CD8-positive, alpha-beta T cell (primary cell): ENCODE measurements at regions of chr6 and their contacts with region 1.

Region 1: GRCh38 chr6:106360410-106360988 is at the start of gene CRYBG1:
- DNase-seq: peak; percentile 38 to 82 (median 73)
- ATAC-seq: peak; percentile 95
- H3K4me3 ChIP-seq: peak within 1 kb of the TSS; percentile 44 to 63
- H3K4me3 Mint-ChIP-seq: peak within 1 kb of the TSS; percentile 72
- H3K27ac ChIP-seq: no peak within 1 kb of the TSS
- H3K27ac Mint-ChIP-seq: no peak within 1 kb of the TSS
- H3K4me1 ChIP-seq: peaks cover 13% of the 10 kb centered on the region
- H3K4me1 Mint-ChIP-seq: peaks cover 11% of the 10 kb centered on the region
- H3K27me3 ChIP-seq: peaks cover 19 to 20% of the 10 kb centered on the region in 2 experiments
- H3K27me3 Mint-ChIP-seq: peaks cover 48% of the 10 kb centered on the region
- CTCF ChIP-seq: peak; percentile 97
- total RNA-seq, gene CRYBG1: 45.0 to 46.2 TPM

Region 2: DNA sequence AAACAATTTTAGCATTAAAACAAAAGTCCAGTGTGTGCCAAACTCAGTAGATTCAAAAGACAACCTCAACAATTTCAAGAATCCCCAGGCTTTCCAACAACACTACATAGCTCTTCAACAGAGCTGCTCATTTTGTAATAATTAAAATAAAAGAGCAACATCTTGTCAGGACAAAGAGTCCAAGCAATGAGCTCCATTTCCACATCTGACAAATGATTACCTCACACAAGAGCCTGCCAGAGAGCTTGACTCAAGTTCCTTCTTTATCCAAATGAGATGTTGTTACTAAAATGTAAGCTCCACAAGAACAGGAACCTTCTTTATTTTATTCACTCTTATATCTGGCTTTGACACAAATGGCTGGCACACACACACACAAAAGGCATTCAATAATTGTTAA is 1950.6 kb before region 1 on chr6:
- CTCF ChIA-PET with region 1: no interaction called
- POLR2A ChIA-PET with region 1: no interaction called
- intact Hi-C with region 1: no loop called
- DNase-seq: no peak
- ATAC-seq: no peak
- H3K4me3 ChIP-seq: no peak overlapping the region
- H3K4me3 Mint-ChIP-seq: no peak overlapping the region
- H3K27ac ChIP-seq: no peak overlapping the region
- H3K27ac Mint-ChIP-seq: no peak overlapping the region
- H3K4me1 ChIP-seq: no peaks in the 10 kb centered on the region
- H3K4me1 Mint-ChIP-seq: no peaks in the 10 kb centered on the region
- H3K27me3 ChIP-seq: no peaks in the 10 kb centered on the region
- H3K27me3 Mint-ChIP-seq: no peaks in the 10 kb centered on the region
- CTCF ChIP-seq: no peak

Region 3: DNA sequence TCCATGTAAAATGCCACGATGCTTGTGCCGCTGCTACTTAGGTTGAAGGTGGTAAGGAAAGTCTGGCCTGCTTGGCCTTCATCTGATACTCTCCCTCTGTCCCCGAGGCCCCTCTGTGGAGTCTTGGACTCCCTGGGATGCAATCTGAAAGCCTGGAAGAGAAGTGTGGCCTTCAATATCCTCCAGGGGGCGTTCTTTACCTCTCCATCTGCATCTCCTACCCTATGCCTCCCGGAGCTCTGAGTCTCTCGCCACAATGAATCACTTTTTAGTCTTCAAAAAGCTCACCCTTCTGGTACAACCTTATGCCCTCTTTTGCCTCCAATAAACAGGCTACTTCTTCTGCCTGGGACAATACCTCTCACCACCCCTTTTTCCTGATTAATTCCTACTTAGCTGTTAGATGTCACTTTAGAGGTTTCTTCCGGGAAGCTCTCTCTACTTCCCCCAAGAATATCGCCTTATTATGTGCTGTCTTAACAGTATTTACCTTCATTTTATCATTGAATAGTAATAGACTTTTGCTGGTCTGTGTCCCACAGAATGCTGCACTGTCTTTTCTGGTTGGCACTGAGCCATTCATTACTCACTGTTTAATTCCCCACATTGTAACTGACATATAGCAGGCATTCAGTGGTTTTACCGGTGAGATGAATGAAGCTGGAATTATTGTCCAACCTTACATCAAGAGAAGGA is 21.0 kb before region 1 on chr6:
- CTCF ChIA-PET with region 1: interaction called, 8 read pairs
- POLR2A ChIA-PET with region 1: no interaction called
- intact Hi-C with region 1: loop called in 1 of 2 experiments (anchors 2 kb)
- DNase-seq: peak in 7 of 9 experiments; percentile 3 to 70 (median 43)
- ATAC-seq: peak; percentile 84
- H3K4me3 ChIP-seq: no peak overlapping the region
- H3K4me3 Mint-ChIP-seq: peak overlapping the region; percentile 33
- H3K27ac ChIP-seq: no peak overlapping the region
- H3K27ac Mint-ChIP-seq: no peak overlapping the region
- H3K4me1 ChIP-seq: no peaks in the 10 kb centered on the region
- H3K4me1 Mint-ChIP-seq: peaks cover 6% of the 10 kb centered on the region
- H3K27me3 ChIP-seq: peaks cover 0 to 2% of the 10 kb centered on the region in 2 experiments
- H3K27me3 Mint-ChIP-seq: peaks cover 23% of the 10 kb centered on the region
- CTCF ChIP-seq: peak; percentile 74

Region 4: DNA sequence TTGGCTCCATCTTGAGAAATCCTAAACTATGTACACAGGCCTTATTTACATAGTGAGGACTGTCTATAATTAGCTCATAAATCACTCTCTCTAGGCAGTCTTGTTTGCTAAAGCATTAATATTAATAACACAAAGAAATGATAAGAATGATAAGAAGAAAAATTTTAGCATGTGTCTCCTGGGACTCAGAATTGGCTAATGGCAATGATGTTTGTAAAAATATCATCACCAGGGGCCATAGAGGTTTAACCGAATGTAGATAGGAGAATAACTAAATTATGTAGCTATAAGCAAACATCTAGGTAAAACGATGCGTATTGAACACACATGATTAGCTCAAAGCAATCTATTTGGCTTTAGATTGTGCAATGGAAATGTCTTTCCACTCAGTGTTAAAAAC is 13.2 kb before region 1 on chr6:
- CTCF ChIA-PET with region 1: interaction called, 11 read pairs
- POLR2A ChIA-PET with region 1: no interaction called
- intact Hi-C with region 1: no loop called
- DNase-seq: no peak
- ATAC-seq: no peak
- H3K4me3 ChIP-seq: no peak overlapping the region
- H3K4me3 Mint-ChIP-seq: no peak overlapping the region
- H3K27ac ChIP-seq: no peak overlapping the region
- H3K27ac Mint-ChIP-seq: no peak overlapping the region
- H3K4me1 ChIP-seq: no peaks in the 10 kb centered on the region
- H3K4me1 Mint-ChIP-seq: no peaks in the 10 kb centered on the region
- H3K27me3 ChIP-seq: peaks cover 0 to 2% of the 10 kb centered on the region in 2 experiments
- H3K27me3 Mint-ChIP-seq: peaks cover 8% of the 10 kb centered on the region
- CTCF ChIP-seq: no peak

Region 5: GRCh38 chr6:106370639-106371038 is 10.1 kb after region 1 on chr6:
- CTCF ChIA-PET with region 1: interaction called, 14 read pairs
- POLR2A ChIA-PET with region 1: no interaction called
- intact Hi-C with region 1: no loop called
- DNase-seq: no peak
- ATAC-seq: no peak
- H3K4me3 ChIP-seq: no peak overlapping the region
- H3K4me3 Mint-ChIP-seq: no peak overlapping the region
- H3K27ac ChIP-seq: no peak overlapping the region
- H3K27ac Mint-ChIP-seq: no peak overlapping the region
- H3K4me1 ChIP-seq: no peaks in the 10 kb centered on the region
- H3K4me1 Mint-ChIP-seq: no peaks in the 10 kb centered on the region
- H3K27me3 ChIP-seq: no peaks in the 10 kb centered on the region
- H3K27me3 Mint-ChIP-seq: peaks cover 17% of the 10 kb centered on the region
- CTCF ChIP-seq: no peak